Mammary epithelial cell (primary cell): ENCODE measurements at regions of chr7 and their contacts with region 1.

Region 1: GRCh38 chr7:27825891-27826290 is 85.9 kb downstream of the TAX1BP1 start:
- DNase-seq: no peak
- H3K4me3 ChIP-seq: no peak overlapping the region
- H3K27ac ChIP-seq: no peak overlapping the region
- H3K4me1 ChIP-seq: no peaks in the 10 kb centered on the region
- H3K27me3 ChIP-seq: no peaks in the 10 kb centered on the region
- CTCF ChIP-seq: no peak

Region 2: DNA sequence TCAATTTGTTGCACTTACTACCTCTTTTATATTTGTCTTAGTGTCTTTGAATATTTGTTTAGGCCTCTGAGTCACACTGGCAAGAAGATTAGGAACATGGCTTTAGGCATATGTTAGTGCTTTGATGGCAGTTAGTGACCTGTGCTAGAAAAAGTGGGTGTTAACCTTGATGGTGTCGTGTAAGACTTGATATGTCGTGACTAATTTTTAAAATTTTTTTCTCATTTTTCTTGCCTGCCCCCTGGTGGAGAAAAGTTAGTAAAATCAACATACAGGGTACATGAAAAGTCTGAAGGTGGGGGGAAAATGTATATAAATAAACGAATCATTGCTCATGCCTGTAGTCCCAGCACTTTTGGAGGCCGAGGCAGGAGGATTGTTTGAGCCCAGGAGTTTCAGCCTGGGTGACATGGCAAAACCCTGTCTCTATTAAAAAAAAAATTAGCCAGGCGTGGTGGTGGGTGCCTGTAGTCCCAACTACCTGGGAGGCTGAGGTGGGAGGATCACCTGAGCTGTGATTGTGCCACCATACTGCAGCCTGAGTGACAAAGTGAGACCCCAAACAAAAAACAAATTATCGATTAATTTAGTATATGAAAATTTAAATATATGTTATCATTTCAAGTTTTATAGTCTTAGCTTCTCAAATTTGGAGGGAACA is 41.4 kb before region 1 on chr7:
- CTCF ChIA-PET with region 1: no interaction called
- dilution Hi-C with region 1: loop called (anchors 5 kb)
- in situ Hi-C with region 1: no loop called
- intact Hi-C with region 1: no loop called
- DNase-seq: peak; percentile 51
- H3K4me3 ChIP-seq: no peak overlapping the region
- H3K27ac ChIP-seq: no peak overlapping the region
- H3K4me1 ChIP-seq: peaks cover 6% of the 10 kb centered on the region
- H3K27me3 ChIP-seq: no peaks in the 10 kb centered on the region
- CTCF ChIP-seq: peak; percentile 46 to 58

Region 3: DNA sequence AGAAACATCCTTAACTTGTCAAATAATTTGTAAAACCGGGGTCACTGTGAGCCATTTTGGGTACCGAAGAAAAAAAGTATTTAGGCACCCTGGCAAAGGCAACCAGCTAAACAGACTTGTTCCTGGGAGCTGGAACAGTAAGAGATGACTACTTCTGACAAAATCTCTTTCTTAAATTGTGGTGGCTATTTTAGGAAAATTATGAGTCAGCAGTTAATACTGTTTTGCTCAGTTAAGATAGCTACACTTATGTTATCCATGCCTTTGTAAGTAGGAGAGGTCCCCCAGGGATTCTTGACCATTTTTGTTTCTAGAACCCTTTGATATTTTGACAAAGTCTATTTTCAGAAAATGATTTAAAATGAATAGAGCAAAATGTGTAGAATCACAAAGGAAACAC is 17.3 kb before region 1 on chr7:
- CTCF ChIA-PET with region 1: no interaction called
- dilution Hi-C with region 1: no loop called
- in situ Hi-C with region 1: no loop called
- intact Hi-C with region 1: loop called (anchors 2 kb)
- DNase-seq: peak; percentile 20
- H3K4me3 ChIP-seq: no peak overlapping the region
- H3K27ac ChIP-seq: no peak overlapping the region
- H3K4me1 ChIP-seq: peaks cover 5% of the 10 kb centered on the region
- H3K27me3 ChIP-seq: no peaks in the 10 kb centered on the region
- CTCF ChIP-seq: no peak

Region 4: DNA sequence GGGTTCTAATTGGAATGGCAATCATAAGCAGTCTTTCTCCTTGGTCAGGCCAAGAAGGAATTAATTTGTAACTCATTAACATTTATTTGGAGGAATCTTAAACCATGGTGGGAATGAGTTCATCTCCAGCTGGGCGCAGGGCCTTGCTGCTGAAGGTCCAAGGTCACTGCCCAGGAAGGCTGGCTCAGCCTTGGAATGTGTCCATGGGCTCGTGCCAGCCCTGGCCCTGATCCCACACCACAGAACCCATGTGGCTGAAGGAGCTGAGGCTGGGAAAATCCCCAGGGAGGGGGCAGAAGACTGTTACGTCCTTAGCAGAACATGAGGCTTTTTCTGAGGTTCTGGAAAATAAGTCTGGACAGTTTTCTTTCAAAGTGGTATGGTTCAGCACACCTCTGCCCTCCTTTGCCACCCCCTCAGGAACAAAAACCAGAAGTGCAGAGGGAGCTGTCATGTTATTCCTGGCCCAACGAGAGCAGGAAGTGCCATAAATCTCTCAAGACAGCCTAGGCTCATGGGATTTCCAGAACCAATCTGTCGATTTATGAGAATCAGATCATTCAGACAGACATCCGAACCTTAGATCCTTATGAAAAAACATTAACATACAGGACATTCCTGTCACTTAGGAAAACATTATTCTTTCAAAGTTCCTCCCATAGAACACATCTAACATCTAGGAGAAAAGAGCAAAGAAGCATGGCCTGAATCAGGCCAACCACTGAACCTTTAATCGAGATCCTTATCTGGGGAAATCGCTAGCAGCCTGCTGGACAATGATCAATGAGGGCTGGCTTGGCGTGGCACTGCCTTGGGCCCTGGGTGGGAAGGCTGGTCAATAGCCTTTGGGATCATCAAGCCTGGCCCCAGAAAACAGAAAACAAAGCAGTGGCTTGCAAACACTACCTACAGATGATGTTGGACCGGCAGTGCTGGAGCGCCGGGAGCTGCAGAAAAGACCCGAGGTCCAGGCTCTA is 48.4 kb after region 1 on chr7:
- CTCF ChIA-PET with region 1: no interaction called
- dilution Hi-C with region 1: no loop called
- in situ Hi-C with region 1: no loop called
- intact Hi-C with region 1: no loop called
- DNase-seq: peak; percentile 34
- H3K4me3 ChIP-seq: no peak overlapping the region
- H3K27ac ChIP-seq: no peak overlapping the region
- H3K4me1 ChIP-seq: no peaks in the 10 kb centered on the region
- H3K27me3 ChIP-seq: no peaks in the 10 kb centered on the region
- CTCF ChIP-seq: no peak